A673 (cell line): ENCODE measurements at regions of chr4 and their contacts with region 1.

Region 1: GRCh38 chr4:172232966-172233365 is 419.8 kb downstream of the GALNTL6 start:
- DNase-seq: peak; percentile 29
- H3K4me3 ChIP-seq: no peak overlapping the region
- H3K27ac ChIP-seq: no peak overlapping the region
- H3K4me1 ChIP-seq: no peaks in the 10 kb centered on the region
- H3K27me3 ChIP-seq: peaks cover 4% of the 10 kb centered on the region
- CTCF ChIP-seq: peak; percentile 42; the same call in 1 of the 2 replicates

Region 2: GRCh38 chr4:172018358-172018757 is 214.6 kb before region 1 on chr4:
- CTCF ChIA-PET with region 1: no interaction called
- POLR2A ChIA-PET with region 1: no interaction called
- intact Hi-C with region 1: no loop called
- DNase-seq: no peak
- H3K4me3 ChIP-seq: no peak overlapping the region
- H3K27ac ChIP-seq: no peak overlapping the region
- H3K4me1 ChIP-seq: no peaks in the 10 kb centered on the region
- H3K27me3 ChIP-seq: no peaks in the 10 kb centered on the region
- CTCF ChIP-seq: no peak

Region 3: GRCh38 chr4:172220679-172221078 is 12.3 kb before region 1 on chr4:
- CTCF ChIA-PET with region 1: no interaction called
- POLR2A ChIA-PET with region 1: no interaction called
- intact Hi-C with region 1: no loop called
- DNase-seq: no peak
- H3K4me3 ChIP-seq: no peak overlapping the region
- H3K27ac ChIP-seq: no peak overlapping the region
- H3K4me1 ChIP-seq: no peaks in the 10 kb centered on the region
- H3K27me3 ChIP-seq: peaks cover 14% of the 10 kb centered on the region
- CTCF ChIP-seq: no peak

Region 4: DNA sequence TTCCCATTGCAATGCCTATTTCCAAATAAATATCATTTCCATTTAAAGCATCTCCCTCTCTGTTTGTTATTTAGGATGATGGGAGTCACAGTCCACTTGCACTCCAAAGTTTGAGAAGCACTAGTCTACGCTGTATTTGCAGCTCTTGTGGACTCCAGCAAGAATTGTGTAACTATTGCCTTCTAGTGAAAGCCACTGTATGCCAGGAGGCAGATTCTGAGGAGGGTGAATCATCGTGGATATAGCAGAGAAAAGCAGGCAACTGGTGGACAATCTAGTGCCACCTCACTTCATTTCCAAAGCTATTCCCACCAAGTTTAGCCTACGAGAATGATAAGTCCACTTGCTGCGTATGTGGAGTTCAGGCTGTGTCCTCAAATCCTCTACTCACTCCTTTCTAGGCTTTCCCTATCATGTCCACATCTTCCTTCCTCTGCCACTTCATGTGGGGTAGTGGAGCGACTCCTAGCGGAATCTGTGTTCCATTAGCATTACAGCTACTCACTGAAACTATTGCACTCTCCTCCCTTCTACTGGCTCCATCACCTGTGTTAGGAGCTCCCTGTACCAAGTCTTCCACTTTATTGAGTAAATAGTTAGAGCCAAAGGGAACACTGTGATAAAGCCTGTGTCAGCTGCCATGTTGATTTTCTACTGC is 433.9 kb after region 1 on chr4:
- CTCF ChIA-PET with region 1: no interaction called
- POLR2A ChIA-PET with region 1: no interaction called
- intact Hi-C with region 1: loop called (anchors 10 kb)
- DNase-seq: peak; percentile 72
- H3K4me3 ChIP-seq: no peak overlapping the region
- H3K27ac ChIP-seq: no peak overlapping the region
- H3K4me1 ChIP-seq: no peaks in the 10 kb centered on the region
- H3K27me3 ChIP-seq: peaks cover 4% of the 10 kb centered on the region
- CTCF ChIP-seq: peak; percentile 70

Region 5: GRCh38 chr4:172813359-172813923 is 580.5 kb after region 1 on chr4:
- CTCF ChIA-PET with region 1: interaction called, 11 read pairs
- POLR2A ChIA-PET with region 1: no interaction called
- intact Hi-C with region 1: no loop called
- DNase-seq: no peak
- H3K4me3 ChIP-seq: no peak overlapping the region
- H3K27ac ChIP-seq: no peak overlapping the region
- H3K4me1 ChIP-seq: no peaks in the 10 kb centered on the region
- H3K27me3 ChIP-seq: no peaks in the 10 kb centered on the region
- CTCF ChIP-seq: no peak

Region 6: GRCh38 chr4:172830295-172830764 is 597.4 kb after region 1 on chr4:
- CTCF ChIA-PET with region 1: no interaction called
- POLR2A ChIA-PET with region 1: no interaction called
- intact Hi-C with region 1: loop called (anchors 10 kb)
- DNase-seq: peak; percentile 55
- H3K4me3 ChIP-seq: no peak overlapping the region
- H3K27ac ChIP-seq: no peak overlapping the region
- H3K4me1 ChIP-seq: no peaks in the 10 kb centered on the region
- H3K27me3 ChIP-seq: no peaks in the 10 kb centered on the region
- CTCF ChIP-seq: peak; percentile 60